Thyroid gland (tissue), 4 donors: ENCODE measurements at regions of chr9 and their contacts with region 1.

Region 1: DNA sequence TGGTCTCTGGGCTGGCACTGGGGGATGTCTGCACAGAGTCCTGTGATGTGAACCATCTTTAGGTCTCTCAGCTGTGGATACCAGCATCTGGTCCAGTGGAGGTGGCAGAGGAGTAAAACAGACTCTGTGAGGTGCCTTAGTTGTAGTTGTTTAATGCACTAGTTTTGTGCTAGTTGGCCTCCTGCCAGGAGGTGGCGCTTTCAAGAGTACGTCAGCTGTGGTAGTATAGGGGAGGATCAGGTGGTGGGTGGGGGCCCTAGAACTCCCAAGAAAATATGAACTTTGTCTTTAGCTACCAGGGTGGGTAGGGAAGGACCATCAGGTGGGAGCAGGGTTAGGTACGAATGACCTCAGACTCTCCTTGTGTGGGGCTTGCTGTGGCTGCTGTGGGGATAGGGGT is 197.1 kb downstream of the TMC1 start:
- DNase-seq: peak in 1 of 2 donors; percentile 1
- H3K4me3 ChIP-seq: no peak overlapping the region
- H3K27ac ChIP-seq: no peak overlapping the region
- H3K4me1 ChIP-seq: no peaks in the 10 kb centered on the region
- H3K27me3 ChIP-seq: no peaks in the 10 kb centered on the region
- CTCF ChIP-seq: no peak
- POLR2A ChIP-seq: no peak

Region 2: DNA sequence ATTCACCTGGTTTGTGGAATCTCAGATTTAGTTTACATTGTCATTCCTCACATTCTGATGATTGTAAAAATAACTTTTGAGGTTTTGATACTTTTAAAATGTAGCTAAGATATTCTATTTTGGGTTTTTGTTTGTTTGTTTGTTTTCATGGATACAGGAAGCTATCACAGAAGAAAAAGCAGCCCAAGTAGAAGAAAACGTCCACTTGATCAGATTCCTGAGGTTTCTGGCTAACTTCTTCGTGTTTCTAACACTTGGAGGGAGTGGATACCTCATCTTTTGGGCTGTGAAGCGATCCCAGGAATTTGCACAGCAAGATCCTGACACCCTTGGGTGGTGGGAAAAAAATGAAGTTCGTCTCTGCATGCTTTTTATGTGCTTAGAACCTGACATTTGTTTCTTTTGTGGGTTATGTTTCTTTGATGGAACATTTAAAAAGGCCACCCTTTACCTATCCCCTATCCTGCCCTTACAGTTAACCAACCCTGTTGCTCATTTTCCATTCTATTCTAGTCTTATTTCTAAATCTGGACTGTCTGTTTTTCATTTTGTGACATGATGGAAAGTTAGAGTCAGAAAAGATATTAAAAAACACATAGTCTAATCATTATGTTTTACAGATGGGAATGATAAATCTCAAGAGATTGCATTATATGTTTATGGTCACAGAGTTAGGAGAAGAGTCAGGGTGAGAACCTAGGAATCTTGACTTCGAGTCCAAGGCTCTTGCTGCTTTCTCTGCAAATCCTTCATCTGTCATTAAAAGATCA is 70.6 kb after region 1 on chr9:
- intact Hi-C with region 1: loop called (anchors 10 kb)
- DNase-seq: no peak
- H3K4me3 ChIP-seq: no peak overlapping the region
- H3K27ac ChIP-seq: no peak overlapping the region
- H3K4me1 ChIP-seq: no peaks in the 10 kb centered on the region
- H3K27me3 ChIP-seq: no peaks in the 10 kb centered on the region
- CTCF ChIP-seq: no peak
- POLR2A ChIP-seq: no peak